Posterior vena cava (tissue), 2 donors: ENCODE measurements at regions of chr15 and their contacts with region 1.

Region 1: GRCh38 chr15:99213187-99213811 is 36.1 kb downstream of the TTC23 start:
- DNase-seq: peak; percentile 92

Region 2: GRCh38 chr15:99104788-99105513 is 108.3 kb before region 1 on chr15 and contains the start of gene SYNM:
- intact Hi-C with region 1: loop called (anchors 2 to 5 kb)
- DNase-seq: peak; percentile 90
- total RNA-seq, gene SYNM: 447 to 863 TPM

Region 3: DNA sequence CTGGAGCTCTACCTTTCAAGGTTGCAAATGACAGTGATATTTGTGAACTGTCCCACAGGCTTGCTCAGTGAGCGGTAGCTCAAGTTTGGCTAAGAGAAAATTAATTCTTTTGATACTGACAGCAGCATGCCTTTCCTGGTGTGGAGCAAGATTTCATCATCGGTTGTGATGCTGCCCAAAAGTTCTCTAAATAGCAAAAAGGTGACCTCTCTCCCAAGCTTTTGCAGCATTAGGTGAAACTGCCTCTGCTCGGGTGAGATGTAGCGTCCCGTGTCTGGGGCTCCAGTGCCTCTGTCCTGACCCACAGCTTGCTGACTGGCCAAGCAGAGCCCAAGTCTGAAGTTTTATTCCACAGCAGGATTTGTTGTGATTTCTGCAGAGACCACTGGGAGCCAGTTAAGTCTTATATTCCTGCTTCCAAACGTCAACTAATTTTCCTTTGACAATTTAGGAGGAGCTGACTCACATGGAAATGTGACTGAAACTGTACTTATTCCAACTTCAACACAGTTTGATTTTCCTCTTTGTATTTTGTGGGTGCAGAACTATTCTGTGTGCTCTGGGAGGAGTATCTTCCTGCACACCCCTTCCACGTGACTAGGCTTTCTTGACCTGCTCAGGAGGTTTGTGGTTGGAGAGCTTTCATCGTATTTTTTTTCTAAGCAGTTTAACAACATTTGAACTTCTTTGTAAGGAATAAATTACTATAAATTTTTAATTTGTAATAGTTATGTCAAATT is 102.5 kb before region 1 on chr15:
- intact Hi-C with region 1: loop called in 1 of 2 experiments (anchors 5 kb)
- DNase-seq: no peak